Activated CD8-positive, alpha-beta T cell treated with anti-CD3 and anti-CD28 coated beads for 36 hours (primary cell): ENCODE measurements at regions of chr1 and their contacts with region 1.

Region 1: DNA sequence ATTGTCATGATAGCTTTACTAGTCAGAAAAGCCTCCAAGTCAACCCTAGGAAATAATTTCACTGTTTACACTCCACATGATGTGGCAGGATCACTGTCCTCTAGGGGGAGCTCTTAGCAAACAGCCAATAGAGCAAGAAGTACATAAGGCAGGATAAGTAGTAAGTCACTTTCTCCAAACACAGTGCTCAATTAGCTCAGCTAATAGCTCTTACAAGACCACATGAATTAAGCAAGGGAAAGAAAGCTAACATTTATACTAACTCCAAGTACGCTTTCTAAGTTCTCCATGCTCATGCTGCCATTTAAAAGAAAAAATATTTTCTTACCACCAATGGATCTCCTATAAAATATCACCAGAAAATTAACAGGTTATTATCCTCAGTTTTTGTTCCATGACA is 66.9 kb upstream of the LRIF1 start:
- DNase-seq: peak; percentile 75
- ATAC-seq: peak; percentile 67
- H3K4me3 Mint-ChIP-seq: no peak overlapping the region
- H3K27ac Mint-ChIP-seq: no peak overlapping the region
- H3K4me1 Mint-ChIP-seq: no peaks in the 10 kb centered on the region
- H3K27me3 Mint-ChIP-seq: peaks cover 5% of the 10 kb centered on the region
- CTCF ChIP-seq: peak; percentile 79

Region 2: DNA sequence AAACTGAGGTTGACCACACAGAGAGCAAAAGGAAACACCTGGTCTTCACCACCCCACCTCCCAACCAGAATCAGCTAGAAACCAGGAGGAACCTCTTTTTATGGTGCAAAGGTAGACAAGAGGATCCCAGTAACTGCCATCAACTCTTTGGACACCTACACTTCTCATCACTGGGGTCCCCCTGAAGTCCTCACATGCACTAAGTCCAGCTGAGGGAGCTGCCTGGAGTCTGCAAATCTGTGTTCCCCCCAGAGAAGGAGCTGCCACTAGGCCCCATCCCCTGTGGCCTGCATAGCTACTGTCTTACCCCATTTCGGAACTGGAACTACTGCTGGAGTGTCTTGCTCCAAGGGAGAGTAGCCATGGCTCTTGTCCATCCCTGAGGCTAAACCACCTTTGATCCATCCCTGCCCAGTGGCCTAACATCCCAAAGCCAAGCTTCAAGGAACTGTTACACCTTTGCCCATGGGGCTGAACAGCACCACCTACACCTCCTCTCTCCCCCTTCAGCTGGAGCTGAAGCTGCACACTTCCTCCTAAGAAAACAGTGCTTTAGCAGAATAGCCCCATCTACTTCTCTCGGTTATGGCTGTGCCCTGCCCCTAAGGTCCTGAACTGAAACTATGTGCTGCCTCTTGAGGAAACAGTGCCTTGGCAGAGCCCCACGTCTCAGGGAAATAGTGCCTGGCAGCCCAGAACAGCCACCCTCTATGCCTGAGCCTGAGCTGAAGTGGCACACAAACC is 243.1 kb before region 1 on chr1:
- CTCF ChIA-PET with region 1: interaction called, 22 read pairs
- POLR2A ChIA-PET with region 1: no interaction called
- intact Hi-C with region 1: loop called (anchors 10 kb)
- DNase-seq: peak; percentile 73
- ATAC-seq: peak; percentile 73
- H3K4me3 Mint-ChIP-seq: peak overlapping the region; percentile 35
- H3K27ac Mint-ChIP-seq: peak overlapping the region; percentile 84
- H3K4me1 Mint-ChIP-seq: peaks cover 51% of the 10 kb centered on the region
- H3K27me3 Mint-ChIP-seq: no peaks in the 10 kb centered on the region
- CTCF ChIP-seq: no peak

Region 3: GRCh38 chr1:110986407-110986891 is 44.1 kb before region 1 on chr1:
- CTCF ChIA-PET with region 1: interaction called, 27 read pairs
- POLR2A ChIA-PET with region 1: no interaction called
- intact Hi-C with region 1: no loop called
- DNase-seq: no peak
- ATAC-seq: no peak
- H3K4me3 Mint-ChIP-seq: no peak overlapping the region
- H3K27ac Mint-ChIP-seq: no peak overlapping the region
- H3K4me1 Mint-ChIP-seq: peaks cover 11% of the 10 kb centered on the region
- H3K27me3 Mint-ChIP-seq: peaks cover 4% of the 10 kb centered on the region
- CTCF ChIP-seq: no peak

Region 4: GRCh38 chr1:111045033-111045722 is 14.6 kb after region 1 on chr1:
- CTCF ChIA-PET with region 1: interaction called, 49 read pairs
- POLR2A ChIA-PET with region 1: no interaction called
- intact Hi-C with region 1: no loop called
- DNase-seq: no peak
- ATAC-seq: no peak
- H3K4me3 Mint-ChIP-seq: no peak overlapping the region
- H3K27ac Mint-ChIP-seq: no peak overlapping the region
- H3K4me1 Mint-ChIP-seq: peaks cover 2% of the 10 kb centered on the region
- H3K27me3 Mint-ChIP-seq: peaks cover 11% of the 10 kb centered on the region
- CTCF ChIP-seq: no peak

Region 5: GRCh38 chr1:111247125-111247838 is 216.7 kb after region 1 on chr1:
- CTCF ChIA-PET with region 1: no interaction called
- POLR2A ChIA-PET with region 1: no interaction called
- intact Hi-C with region 1: no loop called
- DNase-seq: no peak
- ATAC-seq: no peak
- H3K4me3 Mint-ChIP-seq: no peak overlapping the region
- H3K27ac Mint-ChIP-seq: no peak overlapping the region
- H3K4me1 Mint-ChIP-seq: peaks cover 12% of the 10 kb centered on the region
- H3K27me3 Mint-ChIP-seq: no peaks in the 10 kb centered on the region
- CTCF ChIP-seq: no peak

Region 6: DNA sequence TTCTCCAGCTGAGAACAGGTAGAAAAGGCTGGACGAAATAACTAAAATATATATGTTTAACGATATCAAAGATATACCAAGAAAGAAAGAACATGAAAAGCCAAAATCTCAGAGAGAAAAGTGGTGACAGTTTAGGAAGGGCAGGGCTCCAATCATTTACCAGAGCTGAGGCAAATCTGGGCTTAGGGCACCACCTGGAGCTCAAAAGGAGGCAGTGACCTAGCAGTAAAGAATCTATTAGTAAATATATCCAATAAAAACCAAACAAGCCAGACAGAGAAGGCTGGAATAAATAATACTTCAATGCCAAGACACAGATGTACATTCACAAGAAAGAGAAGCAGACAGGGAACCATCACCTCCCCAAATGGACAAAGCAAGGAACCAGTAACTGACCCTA is 303.6 kb after region 1 on chr1:
- CTCF ChIA-PET with region 1: interaction called, 12 read pairs
- POLR2A ChIA-PET with region 1: no interaction called
- intact Hi-C with region 1: no loop called
- DNase-seq: peak; percentile 64
- ATAC-seq: peak; percentile 71
- H3K4me3 Mint-ChIP-seq: no peak overlapping the region
- H3K27ac Mint-ChIP-seq: no peak overlapping the region
- H3K4me1 Mint-ChIP-seq: no peaks in the 10 kb centered on the region
- H3K27me3 Mint-ChIP-seq: no peaks in the 10 kb centered on the region
- CTCF ChIP-seq: peak; percentile 72

Region 7: DNA sequence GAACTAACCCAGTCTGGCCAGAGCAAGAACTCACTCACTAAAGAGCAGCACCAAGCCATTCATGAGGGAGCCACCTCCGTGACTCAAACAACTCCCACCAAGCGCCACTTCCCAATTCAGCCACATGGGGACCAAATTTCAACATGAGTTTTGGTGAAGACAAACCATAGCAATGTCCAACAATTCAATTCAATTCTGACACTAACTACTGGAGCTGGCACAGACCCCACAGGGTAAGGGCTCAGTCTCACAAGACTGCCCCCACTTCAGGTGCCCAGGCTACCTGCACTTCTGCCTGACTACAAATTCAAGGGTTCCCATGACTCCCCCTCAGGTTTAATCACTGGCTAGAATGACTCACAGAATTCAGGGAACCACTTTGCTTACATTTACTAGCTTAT is 540.2 kb after region 1 on chr1:
- CTCF ChIA-PET with region 1: no interaction called
- POLR2A ChIA-PET with region 1: no interaction called
- intact Hi-C with region 1: no loop called
- DNase-seq: peak; percentile 71
- ATAC-seq: peak; percentile 87
- H3K4me3 Mint-ChIP-seq: no peak overlapping the region
- H3K27ac Mint-ChIP-seq: peak overlapping the region; percentile 26
- H3K4me1 Mint-ChIP-seq: peaks cover 14% of the 10 kb centered on the region
- H3K27me3 Mint-ChIP-seq: no peaks in the 10 kb centered on the region
- CTCF ChIP-seq: peak; percentile 35